ENCODE measurements at regions of chr12 and their contacts with region 1.

Region 1: GRCh38 chr12:28998637-28999120 is 150.4 kb upstream of the FAR2 start:
- ATAC-seq: peak in 3 of 8 experiments; percentile 65 to 79 (median 72)
- H3K4me3 ChIP-seq: no peak overlapping the region
- H3K27ac ChIP-seq: no peak overlapping the region
- H3K4me1 ChIP-seq: no peaks in the 10 kb centered on the region

Region 2: GRCh38 chr12:28190321-28191050 is 808.2 kb before region 1 on chr12 and contains the start of gene CCDC91:
- in situ Hi-C with region 1: loop called in 1 of 9 experiments (anchors 25 kb)
- ATAC-seq: peak; percentile 88 to 97 (median 95)
- H3K4me3 ChIP-seq: peak within 1 kb of the TSS; percentile 52 to 79 (median 71)
- H3K27ac ChIP-seq: peak within 1 kb of the TSS; percentile 84 to 96
- H3K4me1 ChIP-seq: peaks cover 4 to 15% of the 10 kb centered on the region in 2 donors
- total RNA-seq, gene CCDC91: 21.6 to 42.3 (median 30.2) TPM

Region 3: DNA sequence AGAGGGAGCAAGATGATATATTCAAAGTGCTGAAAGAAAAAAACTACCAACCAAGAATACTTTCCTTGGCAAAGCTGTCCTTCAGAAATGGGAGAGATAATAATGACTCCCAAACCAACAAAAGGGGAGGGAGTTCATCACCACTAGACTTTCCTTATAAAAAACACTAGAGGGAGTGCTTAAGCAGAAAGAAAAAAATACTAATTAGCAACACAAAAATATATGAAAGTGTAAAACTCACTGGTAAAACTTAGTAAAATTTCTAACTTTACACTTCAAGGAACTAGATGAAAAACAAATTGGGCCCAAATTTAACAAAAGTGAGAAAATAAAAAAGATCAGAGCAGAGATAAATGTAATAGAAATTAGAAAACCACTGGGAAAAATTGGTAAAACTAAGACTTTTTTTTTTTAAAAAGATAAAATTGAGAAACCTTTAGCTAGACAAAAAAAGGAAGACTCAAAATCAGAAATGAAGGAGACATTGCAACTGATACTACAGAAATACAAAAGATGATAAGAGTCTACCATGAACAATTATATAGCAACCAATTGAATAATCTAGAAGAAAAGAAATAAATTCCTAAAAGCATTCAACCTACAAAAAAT is 90.0 kb after region 1 on chr12:
- in situ Hi-C with region 1: no loop called
- ATAC-seq: no peak
- H3K4me3 ChIP-seq: no peak overlapping the region
- H3K27ac ChIP-seq: no peak overlapping the region
- H3K4me1 ChIP-seq: peaks cover 0 to 6% of the 10 kb centered on the region in 2 donors

Region 4: GRCh38 chr12:29374913-29375312 is 376.2 kb after region 1 on chr12:
- in situ Hi-C with region 1: no loop called
- ATAC-seq: no peak
- H3K4me3 ChIP-seq: no peak overlapping the region
- H3K27ac ChIP-seq: no peak overlapping the region
- H3K4me1 ChIP-seq: peaks cover 4 to 12% of the 10 kb centered on the region in 2 donors